Mammary epithelial cell (primary cell): ENCODE measurements at regions of chr6 and their contacts with region 1.

Region 1: GRCh38 chr6:154653853-154654252 is 79.4 kb upstream of the SCAF8 start:
- DNase-seq: peak; percentile 96
- H3K4me3 ChIP-seq: no peak overlapping the region
- H3K27ac ChIP-seq: peak overlapping the region; percentile 80
- H3K4me1 ChIP-seq: peaks cover 11% of the 10 kb centered on the region
- H3K27me3 ChIP-seq: no peaks in the 10 kb centered on the region
- CTCF ChIP-seq: no peak

Region 2: DNA sequence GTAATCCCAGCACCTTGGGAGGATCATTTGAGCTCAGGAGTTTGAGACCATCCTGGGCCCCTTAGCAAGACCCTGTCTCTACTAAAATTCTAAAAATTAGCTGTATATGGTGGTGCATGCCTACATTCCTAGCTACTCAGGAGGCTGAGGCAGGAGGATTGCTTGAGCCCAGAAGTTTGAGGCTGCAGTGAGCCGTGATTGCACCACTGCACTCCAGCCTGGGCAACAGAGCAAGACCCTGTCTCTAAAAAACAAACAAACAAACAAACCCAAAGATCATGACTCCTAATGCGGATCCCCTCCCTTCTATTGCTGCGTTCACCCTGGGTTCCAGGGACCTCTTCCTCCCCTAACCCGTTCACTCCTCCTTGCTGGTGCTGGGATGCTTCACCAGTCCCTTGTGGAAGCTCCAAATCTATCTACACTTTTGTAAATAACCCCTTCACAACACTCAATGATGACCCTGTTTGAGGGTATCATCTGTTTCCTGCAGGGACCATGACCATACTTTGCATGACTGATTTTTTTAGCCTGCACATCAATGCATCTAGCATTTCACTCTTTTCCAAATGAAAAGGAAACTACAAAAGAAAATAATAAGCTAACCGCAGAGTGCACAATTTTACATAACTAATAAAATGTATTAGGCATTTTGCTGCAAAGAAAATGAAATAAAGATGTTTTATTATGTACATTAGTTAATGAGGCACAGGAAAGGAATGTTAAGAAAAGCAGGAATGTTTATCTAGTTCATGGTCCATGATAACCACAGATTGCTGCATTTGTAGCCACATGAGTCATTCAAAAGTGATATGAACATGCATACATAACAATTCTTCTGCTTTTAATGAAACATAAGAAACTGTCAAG is 266.8 kb before region 1 on chr6:
- CTCF ChIA-PET with region 1: no interaction called
- dilution Hi-C with region 1: loop called (anchors 5 kb)
- in situ Hi-C with region 1: no loop called
- intact Hi-C with region 1: no loop called
- DNase-seq: peak; percentile 73
- H3K4me3 ChIP-seq: no peak overlapping the region
- H3K27ac ChIP-seq: no peak overlapping the region
- H3K4me1 ChIP-seq: peaks cover 12% of the 10 kb centered on the region
- H3K27me3 ChIP-seq: no peaks in the 10 kb centered on the region
- CTCF ChIP-seq: no peak

Region 3: DNA sequence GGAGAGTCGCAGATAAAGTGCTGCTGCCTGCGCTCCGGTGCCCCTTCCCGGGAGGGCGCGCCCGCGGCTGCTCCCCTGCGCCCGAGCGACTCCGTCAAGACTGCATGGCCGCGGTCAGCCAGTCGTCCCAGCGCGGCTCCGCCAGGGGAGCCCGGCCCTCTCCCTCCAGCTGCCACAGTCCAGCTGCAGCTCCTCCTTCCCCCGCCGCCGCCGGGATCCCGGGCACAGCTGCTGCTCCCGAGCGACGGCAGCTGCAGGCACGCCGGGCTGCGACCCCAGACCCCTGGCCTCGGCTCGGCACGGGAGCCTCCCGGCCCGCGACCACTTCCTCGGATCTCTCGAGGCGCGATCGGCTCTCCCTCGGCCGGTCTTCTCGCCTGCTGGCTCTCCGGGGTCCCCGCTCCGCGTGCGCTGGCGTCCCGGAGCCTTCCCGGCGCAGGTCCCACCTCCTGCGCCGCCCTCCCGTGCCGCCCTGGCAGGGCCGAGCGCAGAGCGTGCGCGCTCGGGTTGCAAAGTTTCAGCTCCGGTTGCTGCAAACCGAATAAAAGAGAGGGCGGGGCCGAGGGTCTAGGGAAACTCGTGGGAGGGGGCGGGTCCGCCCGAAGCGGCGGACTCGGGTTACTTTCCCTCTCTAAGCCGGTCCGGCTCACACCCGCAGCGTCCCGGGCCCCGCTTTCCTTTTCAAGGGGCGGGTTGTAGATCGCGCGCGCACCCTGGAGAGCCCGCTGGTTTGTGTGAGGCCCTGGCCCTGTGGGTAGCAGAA is 143.5 kb before region 1 on chr6 and contains the start of gene CNKSR3:
- CTCF ChIA-PET with region 1: no interaction called
- dilution Hi-C with region 1: no loop called
- in situ Hi-C with region 1: no loop called
- intact Hi-C with region 1: loop called (anchors 10 kb)
- DNase-seq: peak; percentile 87
- H3K4me3 ChIP-seq: peak within 1 kb of the TSS; percentile 76 to 82 (median 79)
- H3K27ac ChIP-seq: peak within 1 kb of the TSS; percentile 49
- H3K4me1 ChIP-seq: peaks cover 14% of the 10 kb centered on the region
- H3K27me3 ChIP-seq: peaks cover 1% of the 10 kb centered on the region
- CTCF ChIP-seq: peak in 1 of 2 donors; percentile 23
- total RNA-seq, gene CNKSR3: 1.7 to 4.1 TPM

Region 4: DNA sequence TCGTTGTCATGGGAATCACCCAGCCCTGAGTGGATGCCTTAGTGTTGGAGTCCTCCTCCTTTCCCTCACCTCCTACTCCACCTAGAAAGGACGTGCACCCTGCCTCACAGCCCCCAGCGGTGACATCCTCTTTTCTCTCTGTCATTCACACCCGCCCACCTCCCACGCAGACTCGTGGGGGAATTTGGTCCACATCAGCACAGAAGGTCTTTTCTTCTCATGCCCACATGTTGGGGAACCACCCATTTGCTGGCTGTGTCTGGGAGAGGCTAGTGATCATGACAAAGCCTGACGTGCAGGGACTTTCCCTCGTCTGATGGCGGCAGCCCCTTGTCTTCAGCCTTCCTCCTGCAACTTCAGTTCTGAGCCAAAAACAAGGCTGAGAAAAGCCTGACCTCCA is 47.4 kb before region 1 on chr6:
- CTCF ChIA-PET with region 1: no interaction called
- dilution Hi-C with region 1: no loop called
- in situ Hi-C with region 1: no loop called
- intact Hi-C with region 1: no loop called
- DNase-seq: peak; percentile 96
- H3K4me3 ChIP-seq: no peak overlapping the region
- H3K27ac ChIP-seq: peak overlapping the region; percentile 31
- H3K4me1 ChIP-seq: peaks cover 11% of the 10 kb centered on the region
- H3K27me3 ChIP-seq: no peaks in the 10 kb centered on the region
- CTCF ChIP-seq: no peak

Region 5: GRCh38 chr6:154703084-154703483 is 49.2 kb after region 1 on chr6:
- CTCF ChIA-PET with region 1: no interaction called
- dilution Hi-C with region 1: no loop called
- in situ Hi-C with region 1: no loop called
- intact Hi-C with region 1: no loop called
- DNase-seq: no peak
- H3K4me3 ChIP-seq: no peak overlapping the region
- H3K27ac ChIP-seq: no peak overlapping the region
- H3K4me1 ChIP-seq: no peaks in the 10 kb centered on the region
- H3K27me3 ChIP-seq: no peaks in the 10 kb centered on the region
- CTCF ChIP-seq: no peak